ENCODE measurements at regions of chrX and their contacts with region 1.

Region 1: GRCh38 chrX:132292793-132293192 is 73.5 kb upstream of the RAP2C start:
- DNase-seq: peak in 1 of 2 donors; percentile 70
- ATAC-seq: peak in 2 of 3 donors; percentile 38 to 81
- H3K4me3 ChIP-seq: no peak overlapping the region
- H3K4me3 Mint-ChIP-seq: no peak overlapping the region
- H3K27ac ChIP-seq: no peak overlapping the region
- H3K27ac Mint-ChIP-seq: no peak overlapping the region
- H3K4me1 ChIP-seq: no peaks in the 10 kb centered on the region
- H3K4me1 Mint-ChIP-seq: no peaks in the 10 kb centered on the region
- H3K27me3 ChIP-seq: no peaks in the 10 kb centered on the region
- H3K27me3 Mint-ChIP-seq: peaks cover 0 to 5% of the 10 kb centered on the region in 2 donors
- CTCF ChIP-seq: peak; percentile 55

Region 2: GRCh38 chrX:132592880-132593279 is 300.1 kb after region 1 on chrX:
- intact Hi-C with region 1: loop called (anchors 5 kb)
- DNase-seq: peak in 1 of 2 donors; percentile 35
- ATAC-seq: no peak
- H3K4me3 ChIP-seq: no peak overlapping the region
- H3K4me3 Mint-ChIP-seq: no peak overlapping the region
- H3K27ac ChIP-seq: no peak overlapping the region
- H3K27ac Mint-ChIP-seq: no peak overlapping the region
- H3K4me1 ChIP-seq: no peaks in the 10 kb centered on the region
- H3K4me1 Mint-ChIP-seq: no peaks in the 10 kb centered on the region
- H3K27me3 ChIP-seq: no peaks in the 10 kb centered on the region
- H3K27me3 Mint-ChIP-seq: peaks cover 6 to 60% of the 10 kb centered on the region in 2 donors
- CTCF ChIP-seq: no peak